PC-9 (cell line): ENCODE measurements at regions of chr3 and their contacts with region 1.

Region 1: GRCh38 chr3:100106531-100107141 is 7.7 kb downstream of the FILIP1L start:
- DNase-seq: peak in 1 of 2 experiments; percentile 65
- H3K4me3 ChIP-seq: no peak overlapping the region; the same call in 1 of the 2 replicates
- H3K27ac ChIP-seq: peak overlapping the region; percentile 72
- H3K4me1 ChIP-seq: peaks cover 57% of the 10 kb centered on the region
- H3K27me3 ChIP-seq: no peaks in the 10 kb centered on the region
- CTCF ChIP-seq: no peak

Region 2: DNA sequence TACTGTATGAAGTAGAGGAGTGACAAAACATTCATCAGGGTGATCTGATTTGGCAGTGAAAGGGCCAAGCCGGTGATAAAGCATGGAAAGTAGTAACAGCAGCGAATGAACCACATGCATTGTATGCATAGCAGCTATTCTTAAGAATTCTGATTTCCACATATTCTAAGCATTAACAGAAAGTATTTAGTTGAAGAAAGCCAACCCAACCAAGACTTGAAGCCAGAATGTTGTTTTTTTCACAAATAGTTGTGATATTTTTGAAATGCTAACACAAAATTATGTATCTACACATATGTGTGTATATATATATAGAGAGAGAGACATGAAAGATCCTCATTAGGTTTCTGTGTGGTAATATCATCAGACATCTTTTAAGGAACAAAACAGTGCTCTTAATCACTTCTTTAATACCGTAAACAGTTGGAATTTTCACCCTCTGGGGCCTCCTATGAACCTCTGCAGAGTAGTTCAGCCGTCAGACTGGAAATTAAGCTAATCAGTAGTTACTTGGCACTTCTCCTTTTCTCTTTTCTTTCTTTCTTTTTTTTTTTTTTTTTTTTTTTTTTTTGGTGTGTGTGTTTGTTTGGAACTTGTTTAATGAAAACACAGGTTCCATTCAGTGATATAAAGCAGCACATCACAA is 149.4 kb before region 1 on chr3:
- CTCF ChIA-PET with region 1: interaction called, 12 read pairs
- POLR2A ChIA-PET with region 1: no interaction called
- intact Hi-C with region 1: no loop called
- DNase-seq: no peak
- H3K4me3 ChIP-seq: no peak overlapping the region
- H3K27ac ChIP-seq: no peak overlapping the region
- H3K4me1 ChIP-seq: no peaks in the 10 kb centered on the region
- H3K27me3 ChIP-seq: no peaks in the 10 kb centered on the region
- CTCF ChIP-seq: no peak

Region 3: DNA sequence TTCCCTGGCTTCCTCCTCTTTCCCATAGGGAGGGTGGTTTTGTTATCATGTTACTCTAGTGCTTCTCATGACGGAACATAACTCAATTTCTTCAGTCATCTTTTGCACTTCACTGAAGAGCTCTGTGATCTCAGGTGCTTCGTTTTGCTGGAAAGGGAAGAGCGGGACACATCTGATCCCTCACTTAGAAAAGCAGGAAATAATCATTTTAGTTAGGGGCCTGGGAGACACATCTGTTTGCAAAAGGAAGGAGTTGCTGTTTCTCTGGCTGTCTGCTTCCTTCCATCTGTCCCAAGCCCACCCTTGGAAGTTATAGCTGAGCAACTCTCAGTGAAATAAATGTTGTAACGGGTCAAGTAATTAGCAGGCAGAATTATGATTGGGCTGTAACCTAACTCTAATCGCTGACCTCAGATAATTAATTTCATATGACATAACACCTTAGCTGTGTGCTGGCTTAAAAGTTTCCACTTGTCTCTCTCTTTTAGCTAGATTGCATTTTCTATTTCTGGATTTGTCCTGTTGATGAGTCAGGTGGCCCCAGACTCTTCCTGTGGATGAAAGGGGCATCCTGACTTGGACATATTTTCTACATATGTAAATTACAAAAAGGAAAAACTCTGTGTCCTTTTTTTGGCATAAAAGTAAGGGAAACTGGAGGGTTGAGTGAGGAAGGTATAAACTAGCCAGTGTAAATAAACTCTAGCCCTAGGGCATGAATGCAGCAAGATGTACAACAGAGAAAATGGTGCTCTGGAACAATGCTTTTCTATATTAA is 18.7 kb after region 1 on chr3:
- CTCF ChIA-PET with region 1: no interaction called
- POLR2A ChIA-PET with region 1: no interaction called
- intact Hi-C with region 1: no loop called
- DNase-seq: peak in 1 of 2 experiments; percentile 59
- H3K4me3 ChIP-seq: no peak overlapping the region
- H3K27ac ChIP-seq: peak overlapping the region; percentile 13; the same call in 1 of the 2 replicates
- H3K4me1 ChIP-seq: peaks cover 14% of the 10 kb centered on the region
- H3K27me3 ChIP-seq: no peaks in the 10 kb centered on the region
- CTCF ChIP-seq: no peak

Region 4: DNA sequence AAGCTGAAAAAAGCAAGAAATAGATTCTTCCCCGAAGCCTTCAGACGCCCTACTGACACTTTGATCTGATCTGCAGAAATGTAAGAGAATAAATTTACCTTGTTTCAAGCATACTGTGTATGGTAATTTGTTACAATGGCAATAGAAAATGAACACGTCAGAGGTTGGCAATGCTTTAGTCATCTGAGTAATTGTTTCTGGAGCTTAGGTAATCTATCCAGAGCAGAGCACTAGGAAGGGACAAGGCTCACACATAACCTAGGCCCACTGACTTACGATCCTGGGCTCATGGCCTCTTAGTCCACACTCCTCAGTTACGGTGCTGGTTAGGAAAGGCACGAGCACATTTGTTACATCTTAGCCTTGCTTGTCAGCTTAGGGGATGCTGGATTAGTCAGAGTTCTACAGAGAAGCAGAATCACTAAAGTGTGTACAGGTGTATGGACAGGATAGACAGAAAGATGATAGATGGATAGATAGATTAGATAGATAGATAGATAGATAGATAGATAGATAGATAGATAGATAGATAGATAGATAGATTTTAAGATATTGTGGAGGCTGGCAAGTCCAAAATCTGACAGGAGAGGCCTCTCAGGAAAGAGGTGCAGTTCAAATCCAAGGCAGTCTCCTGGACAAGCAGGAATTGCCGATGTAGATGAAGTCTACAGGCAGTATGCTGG is 107.4 kb after region 1 on chr3:
- CTCF ChIA-PET with region 1: no interaction called
- POLR2A ChIA-PET with region 1: no interaction called
- intact Hi-C with region 1: no loop called
- DNase-seq: no peak
- H3K4me3 ChIP-seq: no peak overlapping the region
- H3K27ac ChIP-seq: no peak overlapping the region
- H3K4me1 ChIP-seq: no peaks in the 10 kb centered on the region
- H3K27me3 ChIP-seq: no peaks in the 10 kb centered on the region
- CTCF ChIP-seq: no peak